Activated B cell treated with CpG ODN at 0.5 μM for 24 hours (primary cell): ENCODE measurements at regions of chr1 and their contacts with region 1.

Region 1: GRCh38 chr1:56525489-56526041 is 53.8 kb downstream of the PLPP3 start:
- DNase-seq: peak; percentile 27
- ATAC-seq: peak; percentile 31
- H3K4me3 Mint-ChIP-seq: peak overlapping the region; percentile 48
- H3K27ac Mint-ChIP-seq: peak overlapping the region; percentile 82
- H3K4me1 Mint-ChIP-seq: peaks cover 59% of the 10 kb centered on the region
- H3K27me3 Mint-ChIP-seq: no peaks in the 10 kb centered on the region
- CTCF ChIP-seq: no peak

Region 2: DNA sequence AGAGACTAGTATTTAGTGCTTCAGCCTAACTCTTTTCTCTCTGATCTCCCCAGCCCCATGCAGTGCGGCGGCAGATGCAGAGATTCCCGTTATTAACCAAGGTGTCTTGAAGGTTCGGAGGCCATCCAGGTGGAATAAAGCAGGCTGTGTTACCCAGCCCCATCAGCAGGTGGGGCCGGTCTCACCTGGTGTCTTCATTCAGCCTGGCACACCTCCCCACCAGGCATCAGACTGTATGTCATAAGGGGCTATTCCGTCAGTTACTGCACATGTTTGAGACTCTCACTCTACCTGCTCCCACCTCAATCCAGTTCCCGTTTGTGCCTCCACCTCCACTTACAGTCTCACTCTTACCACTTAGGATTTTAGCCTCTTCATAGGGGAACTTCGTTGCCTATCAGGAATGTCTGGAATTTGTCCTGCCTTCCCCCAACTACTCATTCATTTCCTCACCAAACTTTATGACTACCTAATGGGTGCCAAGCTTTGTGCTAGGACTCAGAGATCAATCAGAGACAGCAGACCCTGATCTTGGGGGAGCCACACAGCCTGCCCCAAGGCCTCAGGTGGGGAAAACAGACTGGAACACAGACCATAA is 116.4 kb before region 1 on chr1:
- CTCF ChIA-PET with region 1: no interaction called
- POLR2A ChIA-PET with region 1: no interaction called
- intact Hi-C with region 1: loop called (anchors 5 kb)
- DNase-seq: peak; percentile 34
- ATAC-seq: no peak
- H3K4me3 Mint-ChIP-seq: no peak overlapping the region
- H3K27ac Mint-ChIP-seq: no peak overlapping the region
- H3K4me1 Mint-ChIP-seq: peaks cover 20% of the 10 kb centered on the region
- H3K27me3 Mint-ChIP-seq: no peaks in the 10 kb centered on the region
- CTCF ChIP-seq: no peak

Region 3: DNA sequence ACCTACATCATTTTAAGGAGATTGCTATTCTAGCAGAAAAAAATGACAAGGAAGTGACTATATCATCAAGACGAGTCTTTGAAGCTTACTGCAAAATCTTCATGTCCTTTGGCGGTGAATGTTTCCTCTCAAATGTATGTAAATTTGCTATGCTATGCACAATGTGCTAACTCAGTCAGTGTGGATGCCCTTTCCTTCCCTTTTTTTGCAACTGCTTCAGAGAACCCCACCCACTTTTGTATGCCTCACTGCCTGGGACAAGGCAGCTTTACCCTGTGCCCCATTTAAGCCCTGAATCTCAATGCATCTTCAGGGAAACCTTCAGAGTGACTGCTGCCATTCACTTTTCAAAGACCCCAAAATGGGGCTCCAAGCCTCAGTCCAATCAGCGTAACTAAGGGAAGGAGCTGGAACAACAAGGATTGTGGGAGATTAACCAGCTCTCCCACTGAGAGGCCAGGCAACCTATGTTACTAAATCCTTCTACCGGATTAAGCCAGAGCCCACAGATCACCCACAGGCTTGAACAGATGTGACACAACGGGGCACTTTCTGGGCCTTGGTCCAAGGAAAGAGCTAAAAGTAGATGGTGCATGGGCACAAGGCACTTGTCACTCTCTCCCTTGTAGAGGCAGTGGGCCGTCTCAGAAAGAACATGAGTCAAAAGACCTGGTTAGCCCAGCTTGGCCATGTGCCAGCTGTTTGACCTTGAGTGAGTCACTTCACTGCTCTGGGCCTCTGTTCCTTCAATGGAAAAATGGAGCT is 100.6 kb before region 1 on chr1:
- CTCF ChIA-PET with region 1: no interaction called
- POLR2A ChIA-PET with region 1: no interaction called
- intact Hi-C with region 1: loop called (anchors 2 kb)
- DNase-seq: no peak
- ATAC-seq: peak; percentile 99
- H3K4me3 Mint-ChIP-seq: peak overlapping the region; percentile 54
- H3K27ac Mint-ChIP-seq: peak overlapping the region; percentile 76
- H3K4me1 Mint-ChIP-seq: peaks cover 36% of the 10 kb centered on the region
- H3K27me3 Mint-ChIP-seq: no peaks in the 10 kb centered on the region
- CTCF ChIP-seq: no peak

Region 4: GRCh38 chr1:56472860-56473259 is 52.7 kb before region 1 on chr1:
- CTCF ChIA-PET with region 1: interaction called, 4 read pairs
- POLR2A ChIA-PET with region 1: interaction called, 3 read pairs
- intact Hi-C with region 1: loop called (anchors 2 kb)
- DNase-seq: peak; percentile 17
- ATAC-seq: peak; percentile 92
- H3K4me3 Mint-ChIP-seq: peak overlapping the region; percentile 55
- H3K27ac Mint-ChIP-seq: peak overlapping the region; percentile 61
- H3K4me1 Mint-ChIP-seq: peaks cover 57% of the 10 kb centered on the region
- H3K27me3 Mint-ChIP-seq: peaks cover 9% of the 10 kb centered on the region
- CTCF ChIP-seq: no peak